RWPE1 (cell line): ENCODE measurements at regions of chr6 and their contacts with region 1.

Region 1: DNA sequence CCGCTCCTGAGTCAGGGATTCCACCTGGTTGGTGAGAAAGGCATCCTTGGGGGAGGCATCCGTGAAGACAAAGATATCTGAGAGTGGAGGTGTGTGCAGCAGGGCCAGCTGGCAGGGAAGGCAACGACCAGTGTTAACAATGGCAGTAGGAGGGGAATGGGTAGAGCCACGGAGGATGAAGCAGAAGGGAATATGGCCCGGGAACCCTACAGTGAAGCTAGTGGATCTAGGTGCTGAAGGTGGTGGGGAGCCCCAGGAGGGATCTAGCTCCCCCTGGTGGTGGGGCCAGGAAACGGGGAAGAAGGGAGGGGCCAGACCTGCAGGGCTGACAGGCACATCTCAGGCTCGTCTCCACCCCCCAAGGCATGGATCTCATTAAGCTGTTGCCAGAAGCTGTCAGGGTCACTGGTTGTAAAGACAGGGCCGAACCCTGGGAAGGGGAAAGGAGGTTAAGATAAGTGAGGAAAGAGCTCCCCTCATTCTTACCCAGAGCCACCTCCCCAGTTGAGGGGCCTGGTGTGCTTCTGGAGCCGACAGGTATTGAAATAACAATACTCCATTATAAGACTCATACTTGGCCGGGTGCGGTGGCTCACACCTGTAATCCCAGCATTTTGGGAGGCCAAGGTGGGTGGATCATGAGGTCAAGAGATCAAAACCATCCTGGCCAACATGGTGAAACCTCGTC is 7.3 kb downstream of the VWA7 start:
- DNase-seq: peak; percentile 85
- H3K27ac ChIP-seq: peak overlapping the region; percentile 23; the same call in 1 of the 2 replicates
- CTCF ChIP-seq: peak; percentile 36; the same call in 1 of the 2 replicates

Region 2: DNA sequence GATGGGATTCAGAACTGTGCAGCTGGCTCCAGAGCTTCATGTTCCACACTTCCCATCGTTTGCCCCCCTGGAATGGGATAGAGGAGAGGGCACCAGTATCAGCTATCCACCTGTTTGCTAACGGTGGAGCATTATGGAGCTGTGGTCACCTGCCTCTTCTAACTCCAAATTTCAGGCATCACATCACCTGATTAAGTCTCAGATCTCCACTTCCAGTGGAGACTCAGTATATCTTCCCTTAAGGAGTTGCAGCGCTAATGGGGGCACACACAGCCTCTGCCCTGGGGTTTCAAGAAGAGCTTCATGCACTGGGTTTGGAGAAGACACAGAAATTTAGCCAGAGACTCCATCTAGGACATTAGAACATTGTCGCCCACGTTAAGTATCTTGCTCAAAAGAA is 85.0 kb before region 1 on chr6:
- CTCF ChIA-PET with region 1: interaction called, 11 read pairs
- POLR2A ChIA-PET with region 1: no interaction called
- DNase-seq: no peak
- H3K27ac ChIP-seq: no peak overlapping the region; the same call in 1 of the 2 replicates
- CTCF ChIP-seq: no peak

Region 3: DNA sequence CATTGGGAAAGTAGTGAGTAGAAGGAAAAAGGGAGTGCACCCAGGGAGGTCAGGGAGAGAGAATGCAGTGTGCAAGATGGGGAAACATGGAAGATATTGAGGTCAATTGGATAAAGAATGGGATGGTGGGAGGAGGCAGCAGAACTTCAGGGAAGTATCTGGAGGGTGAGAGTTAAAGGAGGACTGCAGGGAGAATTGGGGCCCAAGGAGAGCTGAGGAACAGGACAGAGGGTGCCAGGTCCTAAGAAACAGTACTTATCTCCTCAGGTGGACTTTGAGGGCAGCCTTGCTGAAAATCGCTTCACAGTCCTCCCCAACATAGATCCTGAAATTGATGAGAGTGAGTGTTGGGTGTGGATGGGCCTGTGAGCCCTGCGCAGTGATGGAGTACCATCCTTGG is 11.5 kb before region 1 on chr6:
- CTCF ChIA-PET with region 1: interaction called, 11 read pairs
- POLR2A ChIA-PET with region 1: no interaction called
- DNase-seq: no peak
- H3K27ac ChIP-seq: no peak overlapping the region
- CTCF ChIP-seq: no peak